Dendritic cell treated with granulocyte-macrophage colony-stimulating factor and Interleukin-4, amounts not matched to agents 40 ng/mL and 50 ng/mL, for 4 days (primary cell): ENCODE measurements at regions of chr17 and their contacts with region 1.

Region 1: DNA sequence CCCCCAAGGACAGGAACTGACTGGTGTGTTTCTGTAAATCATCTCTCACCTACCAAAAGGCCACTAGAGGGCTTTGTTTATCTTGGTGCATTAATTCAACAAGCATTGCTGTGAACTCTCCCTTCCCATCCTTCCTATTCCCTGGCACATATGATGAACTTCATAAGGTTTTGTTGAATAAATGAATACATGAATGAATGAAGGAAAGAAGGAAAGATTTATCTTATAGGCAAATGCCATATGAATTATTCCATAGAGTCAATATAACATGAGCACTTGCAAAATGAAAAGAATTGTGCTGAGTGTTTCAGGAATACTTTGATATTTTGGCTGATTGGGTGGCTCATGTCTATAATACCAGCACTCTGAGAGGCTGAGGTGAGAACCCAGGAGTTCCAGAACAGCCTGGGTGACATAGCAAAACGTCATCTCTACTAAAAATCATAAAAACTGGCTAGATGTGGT is 4.3 kb downstream of the SPDYE4 start:
- H3K4me3 Mint-ChIP-seq: no peak overlapping the region
- H3K27ac Mint-ChIP-seq: no peak overlapping the region
- H3K4me1 Mint-ChIP-seq: no peaks in the 10 kb centered on the region
- H3K27me3 Mint-ChIP-seq: peaks cover 19% of the 10 kb centered on the region

Region 2: GRCh38 chr17:8785547-8786413 is 31.8 kb after region 1 on chr17:
- intact Hi-C with region 1: loop called (anchors 1 kb)
- H3K4me3 Mint-ChIP-seq: no peak overlapping the region
- H3K27ac Mint-ChIP-seq: peak overlapping the region; percentile 22
- H3K4me1 Mint-ChIP-seq: peaks cover 28% of the 10 kb centered on the region
- H3K27me3 Mint-ChIP-seq: no peaks in the 10 kb centered on the region

Region 3: DNA sequence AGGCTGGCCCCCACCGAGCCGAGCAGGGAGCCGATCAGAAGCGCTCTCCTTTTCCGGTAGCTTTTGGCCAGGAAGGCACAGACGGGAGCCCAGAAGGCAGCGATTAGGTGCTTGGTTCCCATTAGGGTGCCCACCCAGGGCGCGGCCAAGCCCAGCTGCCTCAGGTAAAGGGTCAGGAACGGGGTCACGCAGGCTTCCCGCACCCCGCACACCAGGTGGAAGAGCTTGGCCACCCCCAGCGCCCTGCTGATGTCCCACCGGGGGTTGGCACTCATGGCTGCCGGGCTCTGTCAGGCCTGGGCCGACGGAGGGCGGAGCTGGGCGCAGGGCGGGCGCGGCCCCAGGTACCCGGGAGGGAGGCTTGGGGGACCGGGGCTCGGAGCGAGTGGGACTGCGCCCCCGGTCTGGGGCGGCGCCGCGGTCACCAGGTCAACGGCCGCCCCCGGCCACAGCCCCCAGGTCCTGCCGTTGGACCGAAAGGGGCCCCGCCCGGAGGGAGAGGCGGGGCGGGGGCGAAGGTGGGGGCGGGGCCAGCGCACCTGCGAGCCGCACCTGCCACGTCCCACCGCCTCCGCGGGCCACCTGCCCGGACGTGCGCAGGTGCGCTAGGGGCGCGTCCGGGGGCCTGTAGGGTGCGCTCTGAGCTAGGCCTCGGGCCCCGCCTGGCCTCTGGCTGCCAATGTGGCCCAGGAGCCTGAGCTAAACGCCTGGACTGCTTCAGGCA is 45.0 kb after region 1 on chr17 and contains the start of gene MFSD6L:
- intact Hi-C with region 1: no loop called
- H3K4me3 Mint-ChIP-seq: no peak within 1 kb of the TSS
- H3K27ac Mint-ChIP-seq: peak within 1 kb of the TSS; percentile 1
- H3K4me1 Mint-ChIP-seq: peaks cover 21% of the 10 kb centered on the region
- H3K27me3 Mint-ChIP-seq: no peaks in the 10 kb centered on the region

Region 4: GRCh38 chr17:8991514-8992285 is 237.7 kb after region 1 on chr17:
- intact Hi-C with region 1: loop called (anchors 10 kb)
- H3K4me3 Mint-ChIP-seq: no peak overlapping the region
- H3K27ac Mint-ChIP-seq: no peak overlapping the region
- H3K4me1 Mint-ChIP-seq: peaks cover 17% of the 10 kb centered on the region
- H3K27me3 Mint-ChIP-seq: peaks cover 2% of the 10 kb centered on the region